Tibial artery (tissue), 4 donors: ENCODE measurements at regions of chr14 and their contacts with region 1.

Region 1: DNA sequence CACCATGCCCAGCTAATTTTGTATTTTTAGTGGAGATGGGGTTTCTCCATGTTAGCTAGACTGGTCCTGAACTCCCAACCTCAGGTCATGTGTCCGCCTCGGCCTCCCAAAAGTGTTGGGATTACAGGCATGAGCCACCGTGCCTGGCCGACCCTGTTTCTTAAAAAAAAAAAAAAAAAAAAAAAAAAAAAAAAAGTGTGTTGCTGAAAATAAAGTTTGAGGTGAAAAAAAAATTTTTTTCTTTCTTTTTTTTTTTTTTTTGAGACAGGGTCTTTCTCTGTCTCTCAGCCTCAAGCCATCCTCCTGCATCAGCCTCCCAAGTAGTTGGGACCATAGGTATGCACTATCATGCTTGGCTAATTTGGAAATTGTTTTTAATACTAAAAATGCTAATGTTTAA is 11.3 kb downstream of the RBM25 start:
- DNase-seq: no peak
- H3K4me3 ChIP-seq: no peak overlapping the region
- H3K27ac ChIP-seq: no peak overlapping the region
- H3K4me1 ChIP-seq: peaks cover 0 to 31% (median 10%) of the 10 kb centered on the region in 4 donors
- H3K27me3 ChIP-seq: no peaks in the 10 kb centered on the region
- CTCF ChIP-seq: no peak

Region 2: DNA sequence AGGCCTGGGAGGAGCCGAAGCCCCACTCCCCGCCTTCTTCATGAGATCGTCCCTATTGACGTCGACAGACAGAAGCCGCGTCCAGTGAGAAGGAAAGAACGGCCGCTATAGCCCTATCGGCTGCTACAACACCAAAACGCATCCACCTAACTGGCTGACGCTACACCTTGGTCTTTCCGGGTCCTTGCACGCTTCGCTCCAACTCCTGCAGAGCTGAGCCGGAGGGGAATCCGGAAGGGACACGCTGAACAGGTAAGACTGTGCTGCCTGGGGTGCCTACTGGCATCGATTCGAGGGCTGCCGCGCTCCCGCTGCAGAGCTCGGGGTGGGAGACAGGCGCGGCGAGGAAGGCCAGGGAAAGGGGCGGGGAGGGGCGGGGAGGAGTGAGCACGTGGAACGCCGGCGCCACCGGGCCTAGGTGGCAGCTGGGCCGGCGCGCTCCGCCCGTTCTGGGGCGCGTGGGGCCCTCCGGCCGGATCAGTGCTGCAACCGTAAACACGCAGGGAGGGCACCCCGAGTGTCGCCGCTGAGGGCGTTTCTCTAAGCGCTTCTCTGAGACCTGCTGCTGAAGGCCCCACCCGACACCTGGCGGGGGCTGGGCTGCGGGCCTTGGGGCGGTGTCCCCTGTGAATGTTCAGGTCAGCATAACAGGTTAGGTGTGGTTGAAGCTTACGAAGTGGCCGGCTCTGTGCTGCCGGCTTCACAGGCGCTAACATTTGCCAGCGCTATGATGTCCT is 143.1 kb before region 1 on chr14 and contains the start of gene DCAF4:
- intact Hi-C with region 1: no loop called
- DNase-seq: peak; percentile 98
- H3K4me3 ChIP-seq: peak within 1 kb of the TSS; percentile 66 to 86
- H3K27ac ChIP-seq: peak within 1 kb of the TSS; percentile 78 to 84
- H3K4me1 ChIP-seq: peaks cover 0 to 11% (median 4%) of the 10 kb centered on the region in 4 donors
- H3K27me3 ChIP-seq: no peaks in the 10 kb centered on the region
- CTCF ChIP-seq: no peak

Region 3: DNA sequence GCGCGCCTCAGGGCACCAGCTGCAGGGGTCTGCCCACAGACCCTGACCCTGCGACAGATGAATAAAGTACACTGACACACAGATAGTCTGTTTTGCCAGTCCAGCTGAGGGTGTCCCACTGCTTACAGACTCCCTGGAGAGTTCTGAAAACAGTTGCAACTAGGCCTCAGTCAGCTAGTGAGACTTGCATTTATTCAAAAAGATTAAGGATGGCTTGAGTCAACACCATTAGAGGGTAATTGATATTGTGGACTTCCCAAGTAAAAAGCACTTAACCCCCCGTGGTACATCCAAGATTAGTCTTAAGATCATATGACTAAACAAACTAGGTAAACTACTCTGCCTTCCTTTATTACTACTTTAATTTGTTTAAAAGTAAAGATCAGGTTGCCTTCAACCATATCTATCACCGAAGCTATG is 55.6 kb after region 1 on chr14:
- intact Hi-C with region 1: loop called (anchors 10 kb)
- DNase-seq: no peak
- H3K4me3 ChIP-seq: no peak overlapping the region
- H3K27ac ChIP-seq: no peak overlapping the region
- H3K4me1 ChIP-seq: no peaks in the 10 kb centered on the region
- H3K27me3 ChIP-seq: no peaks in the 10 kb centered on the region
- CTCF ChIP-seq: no peak